ENCODE measurements at regions of chr2 and their contacts with region 1.

Region 1: GRCh38 chr2:118046634-118047210 is 32.9 kb upstream of the CCDC93 start:
- DNase-seq: peak in 6 of 9 donors; percentile 2 to 36 (median 30)
- ATAC-seq: peak; percentile 41
- H3K4me3 ChIP-seq: no peak overlapping the region
- H3K4me3 Mint-ChIP-seq: no peak overlapping the region
- H3K27ac ChIP-seq: no peak overlapping the region
- H3K27ac Mint-ChIP-seq: no peak overlapping the region
- H3K4me1 ChIP-seq: no peaks in the 10 kb centered on the region
- H3K4me1 Mint-ChIP-seq: peaks cover 0 to 4% (median 0%) of the 10 kb centered on the region in 7 donors
- H3K27me3 ChIP-seq: peaks cover 0 to under 1% of the 10 kb centered on the region in 2 donors
- H3K27me3 Mint-ChIP-seq: peaks cover 59 to 69% (median 64%) of the 10 kb centered on the region in 5 donors

Region 2: DNA sequence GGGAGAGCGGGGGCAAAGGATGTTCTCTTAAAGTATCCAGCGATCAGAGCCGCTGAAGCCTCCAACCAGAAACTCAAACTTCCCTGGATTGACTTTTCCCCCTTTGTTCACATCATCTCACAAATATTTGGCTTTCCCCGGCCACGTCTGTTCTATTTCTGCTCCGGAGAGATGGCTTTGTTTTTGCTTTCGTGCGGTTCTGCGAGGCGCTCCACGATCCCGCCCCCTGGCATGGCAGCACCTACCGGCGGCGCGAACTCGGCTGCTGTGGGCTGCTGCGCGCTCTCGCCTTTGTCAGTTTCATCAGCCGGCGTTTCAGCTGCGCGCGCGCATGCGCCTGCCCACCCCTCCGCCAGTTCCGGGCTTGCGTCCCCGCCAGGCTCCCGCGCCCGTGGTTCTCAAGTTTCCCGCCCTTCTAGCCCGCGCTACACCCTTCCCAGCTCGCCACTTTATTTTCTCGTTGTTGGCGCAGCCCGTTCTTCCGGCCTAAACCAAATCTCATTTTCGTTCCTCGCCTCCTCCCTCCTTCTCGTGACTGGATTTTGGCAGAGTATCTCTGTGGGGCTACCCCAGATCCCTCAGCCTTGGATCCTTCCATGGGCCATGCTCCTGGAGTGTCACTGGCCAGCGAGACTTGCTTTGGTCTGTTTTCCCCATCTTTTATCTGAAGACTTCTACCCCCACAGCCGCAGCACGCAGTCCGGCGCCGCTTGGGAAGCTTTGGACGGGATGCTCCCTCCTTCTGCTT is 139.6 kb after region 1 on chr2:
- CTCF ChIA-PET with region 1: no interaction called
- POLR2A ChIA-PET with region 1: interaction called, 3 read pairs
- intact Hi-C with region 1: loop called in 1 of 2 experiments (anchors 1 kb)
- DNase-seq: peak; percentile 77 to 91 (median 86)
- ATAC-seq: peak; percentile 97
- H3K4me3 ChIP-seq: peak overlapping the region; percentile 81
- H3K4me3 Mint-ChIP-seq: peak overlapping the region; percentile 89 to 98 (median 94)
- H3K27ac ChIP-seq: peak overlapping the region; percentile 74
- H3K27ac Mint-ChIP-seq: peak overlapping the region; percentile 88 to 98 (median 90)
- H3K4me1 ChIP-seq: peaks cover 6 to 9% of the 10 kb centered on the region in 2 donors
- H3K4me1 Mint-ChIP-seq: peaks cover 7 to 25% (median 21%) of the 10 kb centered on the region in 7 donors
- H3K27me3 ChIP-seq: no peaks in the 10 kb centered on the region
- H3K27me3 Mint-ChIP-seq: peaks cover 0 to 2% (median 0%) of the 10 kb centered on the region in 5 donors

Region 3: DNA sequence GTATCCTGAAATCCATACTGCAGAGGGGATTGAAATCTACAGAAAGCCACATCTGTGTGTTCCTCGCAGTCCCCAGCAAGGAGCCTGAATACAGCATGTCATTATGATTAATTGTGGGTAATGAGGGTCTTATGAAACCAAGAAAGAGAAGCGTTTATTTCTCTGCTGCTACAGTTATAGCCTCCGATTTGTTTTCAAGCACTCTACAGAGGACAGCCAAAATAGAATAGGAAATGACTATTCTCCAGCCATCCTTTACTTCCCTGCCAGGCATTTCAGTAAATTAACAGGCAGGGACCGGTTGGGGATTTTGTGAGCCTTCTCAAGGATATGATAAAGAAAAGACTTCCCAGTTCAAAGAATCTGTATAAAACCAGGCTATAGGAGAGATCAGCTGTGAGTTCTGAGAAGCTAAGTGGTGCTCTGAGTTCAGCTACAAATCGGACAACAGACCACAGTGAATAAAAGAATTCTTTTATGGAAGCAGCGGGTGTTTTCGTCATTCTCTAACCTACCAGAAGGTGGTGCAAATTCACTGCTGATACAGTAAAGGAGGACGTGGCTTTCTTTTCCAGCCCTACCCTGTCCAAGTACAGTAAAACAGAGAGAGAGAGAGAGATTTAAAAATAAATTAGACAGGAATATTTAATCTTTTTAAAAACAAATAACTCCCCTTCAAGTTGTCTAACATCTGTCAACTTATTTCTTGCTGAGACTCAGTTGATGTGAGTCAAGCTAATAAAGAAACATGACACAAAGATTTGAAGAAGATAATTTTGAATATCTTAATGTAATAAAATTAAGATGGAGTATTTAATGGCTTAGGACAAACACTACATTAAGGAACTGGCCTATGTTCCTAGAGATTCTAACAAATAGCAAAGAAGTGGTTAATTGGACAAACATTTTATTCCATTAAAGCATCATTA is 175.2 kb after region 1 on chr2:
- CTCF ChIA-PET with region 1: no interaction called
- POLR2A ChIA-PET with region 1: no interaction called
- intact Hi-C with region 1: loop called (anchors 1 to 2 kb)
- DNase-seq: peak in 8 of 9 donors; percentile 27 to 65 (median 52)
- ATAC-seq: peak; percentile 82
- H3K4me3 ChIP-seq: no peak overlapping the region
- H3K4me3 Mint-ChIP-seq: peak overlapping the region in 5 of 10 donors; percentile 20 to 88 (median 85)
- H3K27ac ChIP-seq: no peak overlapping the region
- H3K27ac Mint-ChIP-seq: peak overlapping the region in 1 of 9 donors; percentile 67
- H3K4me1 ChIP-seq: peaks cover 8 to 13% of the 10 kb centered on the region in 2 donors
- H3K4me1 Mint-ChIP-seq: peaks cover 12 to 34% (median 24%) of the 10 kb centered on the region in 7 donors
- H3K27me3 ChIP-seq: peaks cover 10 to 39% of the 10 kb centered on the region in 2 donors
- H3K27me3 Mint-ChIP-seq: peaks cover 68 to 79% (median 69%) of the 10 kb centered on the region in 5 donors

Region 4: GRCh38 chr2:118291251-118291880 is 244.6 kb after region 1 on chr2:
- CTCF ChIA-PET with region 1: no interaction called
- POLR2A ChIA-PET with region 1: no interaction called
- intact Hi-C with region 1: no loop called
- DNase-seq: no peak
- ATAC-seq: no peak
- H3K4me3 ChIP-seq: no peak overlapping the region
- H3K4me3 Mint-ChIP-seq: no peak overlapping the region
- H3K27ac ChIP-seq: no peak overlapping the region
- H3K27ac Mint-ChIP-seq: no peak overlapping the region
- H3K4me1 ChIP-seq: no peaks in the 10 kb centered on the region
- H3K4me1 Mint-ChIP-seq: no peaks in the 10 kb centered on the region
- H3K27me3 ChIP-seq: no peaks in the 10 kb centered on the region
- H3K27me3 Mint-ChIP-seq: peaks cover 10 to 42% (median 31%) of the 10 kb centered on the region in 5 donors

Region 5: GRCh38 chr2:118855451-118856279 is 808.9 kb after region 1 on chr2:
- CTCF ChIA-PET with region 1: interaction called, 10 read pairs
- POLR2A ChIA-PET with region 1: no interaction called
- intact Hi-C with region 1: loop called (anchors 1 kb)
- DNase-seq: peak; percentile 61 to 90 (median 84)
- ATAC-seq: peak; percentile 93
- H3K4me3 ChIP-seq: peak overlapping the region; percentile 62
- H3K4me3 Mint-ChIP-seq: peak overlapping the region; percentile 37 to 81 (median 74)
- H3K27ac ChIP-seq: no peak overlapping the region
- H3K27ac Mint-ChIP-seq: peak overlapping the region in 2 of 9 donors; percentile 33 to 81
- H3K4me1 ChIP-seq: peaks cover 0 to 17% of the 10 kb centered on the region in 2 donors
- H3K4me1 Mint-ChIP-seq: peaks cover 19 to 38% (median 24%) of the 10 kb centered on the region in 7 donors
- H3K27me3 ChIP-seq: peaks cover 2 to 41% of the 10 kb centered on the region in 2 donors
- H3K27me3 Mint-ChIP-seq: peaks cover 70 to 93% (median 81%) of the 10 kb centered on the region in 5 donors

Region 6: GRCh38 chr2:119126650-119127049 is 1079.9 kb after region 1 on chr2:
- CTCF ChIA-PET with region 1: no interaction called
- POLR2A ChIA-PET with region 1: no interaction called
- intact Hi-C with region 1: loop called in 1 of 2 experiments (anchors 5 kb)
- DNase-seq: peak in 6 of 9 donors; percentile 10 to 32 (median 12)
- ATAC-seq: peak; percentile 60
- H3K4me3 ChIP-seq: no peak overlapping the region
- H3K4me3 Mint-ChIP-seq: no peak overlapping the region
- H3K27ac ChIP-seq: no peak overlapping the region
- H3K27ac Mint-ChIP-seq: no peak overlapping the region
- H3K4me1 ChIP-seq: no peaks in the 10 kb centered on the region
- H3K4me1 Mint-ChIP-seq: peaks cover 0 to 4% (median 0%) of the 10 kb centered on the region in 7 donors
- H3K27me3 ChIP-seq: no peaks in the 10 kb centered on the region
- H3K27me3 Mint-ChIP-seq: peaks cover 5 to 56% (median 18%) of the 10 kb centered on the region in 5 donors

Region 7: GRCh38 chr2:119476301-119477021 is 1429.7 kb after region 1 on chr2:
- CTCF ChIA-PET with region 1: no interaction called
- POLR2A ChIA-PET with region 1: no interaction called
- intact Hi-C with region 1: loop called in 1 of 2 experiments (anchors 5 kb)
- DNase-seq: peak in 6 of 9 donors; percentile 14 to 52 (median 26)
- ATAC-seq: peak; percentile 61
- H3K4me3 ChIP-seq: no peak overlapping the region
- H3K4me3 Mint-ChIP-seq: no peak overlapping the region
- H3K27ac ChIP-seq: no peak overlapping the region
- H3K27ac Mint-ChIP-seq: no peak overlapping the region
- H3K4me1 ChIP-seq: no peaks in the 10 kb centered on the region
- H3K4me1 Mint-ChIP-seq: peaks cover 0 to 2% (median 0%) of the 10 kb centered on the region in 7 donors
- H3K27me3 ChIP-seq: no peaks in the 10 kb centered on the region
- H3K27me3 Mint-ChIP-seq: peaks cover 0 to 28% (median 9%) of the 10 kb centered on the region in 5 donors

Measured in naive thymus-derived CD4-positive, alpha-beta T cell (primary cell).